ENCODE measurements at regions of chr10 and their contacts with region 1.

Region 1: GRCh38 chr10:7410862-7411670 is at the start of gene SFMBT2:
- DNase-seq: peak; percentile 85
- CTCF ChIP-seq: no peak

Region 2: GRCh38 chr10:6920072-6921019 is 490.7 kb before region 1 on chr10:
- CTCF ChIA-PET with region 1: interaction called, 41 read pairs
- POLR2A ChIA-PET with region 1: no interaction called
- DNase-seq: peak; percentile 82
- CTCF ChIP-seq: peak; percentile 98

Region 3: GRCh38 chr10:7260412-7260900 is 150.6 kb before region 1 on chr10:
- CTCF ChIA-PET with region 1: interaction called, 13 read pairs
- POLR2A ChIA-PET with region 1: no interaction called
- DNase-seq: peak; percentile 64
- CTCF ChIP-seq: peak; percentile 61

Measured in GM10248 (cell line).